ENCODE measurements at regions of chr17 and their contacts with region 1.

Region 1: DNA sequence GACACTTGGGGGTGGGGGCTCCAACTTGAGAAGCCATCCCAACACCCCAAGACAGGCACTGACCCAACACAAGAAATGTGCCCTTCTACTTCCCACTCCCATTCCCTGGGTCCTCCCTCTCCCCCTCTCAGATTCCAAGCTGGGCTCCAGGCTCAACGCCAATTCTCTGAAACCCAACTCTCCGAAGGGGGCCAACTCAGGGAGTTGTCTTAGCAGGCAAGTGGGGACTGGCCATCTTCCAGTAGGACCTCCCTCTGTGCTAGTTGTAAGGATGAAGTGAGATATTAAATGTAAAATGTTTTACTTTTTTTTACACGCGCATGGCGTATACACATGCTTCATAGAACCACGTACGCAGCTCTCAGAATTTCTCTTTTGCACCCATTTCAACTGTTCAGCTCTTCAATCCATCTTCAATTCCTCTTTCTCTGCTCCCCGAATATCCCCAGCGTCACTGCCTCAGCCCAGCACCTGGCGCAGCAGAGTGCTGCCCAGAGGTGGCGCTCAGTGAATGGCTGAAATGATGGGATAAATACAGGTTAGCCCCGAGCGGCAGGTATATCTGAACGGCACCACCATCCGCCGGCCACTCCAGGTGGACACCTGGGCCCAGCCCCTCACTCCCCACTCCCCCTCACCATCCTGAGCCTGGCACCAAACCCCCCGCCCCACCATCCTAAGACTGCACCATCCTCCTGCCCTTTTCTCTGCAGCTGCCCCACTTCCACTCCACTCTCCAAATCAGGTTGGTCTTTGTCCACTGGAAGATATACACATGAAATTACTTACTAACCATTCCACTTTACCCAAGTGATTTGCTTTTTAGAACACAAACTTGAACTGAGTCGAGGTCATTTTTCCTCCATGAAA is 43.9 kb upstream of the TNRC6C start:
- DNase-seq: no peak
- ATAC-seq: no peak
- H3K4me3 Mint-ChIP-seq: no peak overlapping the region
- H3K27ac Mint-ChIP-seq: no peak overlapping the region
- H3K4me1 Mint-ChIP-seq: peaks cover 24% of the 10 kb centered on the region
- H3K27me3 Mint-ChIP-seq: peaks cover 59% of the 10 kb centered on the region
- CTCF ChIP-seq: no peak

Region 2: GRCh38 chr17:77842528-77843147 is 72.0 kb before region 1 on chr17:
- CTCF ChIA-PET with region 1: no interaction called
- POLR2A ChIA-PET with region 1: interaction called, 3 read pairs
- intact Hi-C with region 1: loop called (anchors 2 kb)
- DNase-seq: no peak
- ATAC-seq: no peak
- H3K4me3 Mint-ChIP-seq: peak overlapping the region; percentile 24
- H3K27ac Mint-ChIP-seq: no peak overlapping the region
- H3K4me1 Mint-ChIP-seq: peaks cover 54% of the 10 kb centered on the region
- H3K27me3 Mint-ChIP-seq: peaks cover 61% of the 10 kb centered on the region
- CTCF ChIP-seq: no peak

Region 3: DNA sequence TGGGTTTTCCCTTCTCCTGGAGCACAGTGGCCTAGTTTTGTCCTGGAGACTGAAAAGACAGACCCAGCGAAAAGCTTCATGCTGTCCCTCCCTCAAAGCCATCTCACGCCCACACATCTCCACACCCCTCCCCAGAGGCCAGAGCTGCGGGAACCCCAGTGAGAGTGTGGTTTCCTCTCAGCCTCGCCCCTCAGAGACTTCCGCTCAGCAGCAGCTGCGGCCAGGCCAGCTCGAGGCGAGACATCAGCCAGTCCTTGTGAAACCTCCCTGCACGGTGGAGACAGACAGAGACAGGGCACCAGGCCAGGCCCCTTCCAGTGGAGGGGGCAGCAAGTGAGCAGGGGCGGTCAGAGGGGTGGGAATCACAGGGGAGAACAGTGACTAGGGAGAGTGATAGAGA is 33.1 kb before region 1 on chr17:
- CTCF ChIA-PET with region 1: interaction called, 3 read pairs
- POLR2A ChIA-PET with region 1: interaction called, 22 read pairs
- intact Hi-C with region 1: loop called (anchors 1 kb)
- DNase-seq: peak; percentile 82
- ATAC-seq: peak; percentile 86
- H3K4me3 Mint-ChIP-seq: peak overlapping the region; percentile 76
- H3K27ac Mint-ChIP-seq: peak overlapping the region; percentile 86
- H3K4me1 Mint-ChIP-seq: peaks cover 82% of the 10 kb centered on the region
- H3K27me3 Mint-ChIP-seq: peaks cover 6% of the 10 kb centered on the region
- CTCF ChIP-seq: no peak

Region 4: GRCh38 chr17:78013683-78014467 is 99.3 kb after region 1 on chr17:
- CTCF ChIA-PET with region 1: interaction called, 7 read pairs
- POLR2A ChIA-PET with region 1: no interaction called
- intact Hi-C with region 1: loop called (anchors 5 kb)
- DNase-seq: no peak
- ATAC-seq: peak; percentile 54
- H3K4me3 Mint-ChIP-seq: no peak overlapping the region
- H3K27ac Mint-ChIP-seq: no peak overlapping the region
- H3K4me1 Mint-ChIP-seq: peaks cover 2% of the 10 kb centered on the region
- H3K27me3 Mint-ChIP-seq: no peaks in the 10 kb centered on the region
- CTCF ChIP-seq: peak; percentile 52

Region 5: GRCh38 chr17:78063489-78063888 is 148.9 kb after region 1 on chr17:
- CTCF ChIA-PET with region 1: no interaction called
- POLR2A ChIA-PET with region 1: no interaction called
- intact Hi-C with region 1: no loop called
- DNase-seq: no peak
- ATAC-seq: no peak
- H3K4me3 Mint-ChIP-seq: no peak overlapping the region
- H3K27ac Mint-ChIP-seq: no peak overlapping the region
- H3K4me1 Mint-ChIP-seq: no peaks in the 10 kb centered on the region
- H3K27me3 Mint-ChIP-seq: no peaks in the 10 kb centered on the region
- CTCF ChIP-seq: no peak

Measured in activated B cell treated with CpG ODN at 0.5 μM for 24 hours (primary cell).